Natural killer cell (primary cell): ENCODE measurements at regions of chr5 and their contacts with region 1.

Region 1: GRCh38 chr5:126544087-126544740 is 50.8 kb downstream of the ALDH7A1 start:
- DNase-seq: peak in 1 of 2 donors; percentile 49
- ATAC-seq: no peak
- H3K4me3 ChIP-seq: no peak overlapping the region
- H3K4me3 Mint-ChIP-seq: no peak overlapping the region
- H3K27ac ChIP-seq: no peak overlapping the region
- H3K27ac Mint-ChIP-seq: no peak overlapping the region
- H3K4me1 ChIP-seq: no peaks in the 10 kb centered on the region
- H3K4me1 Mint-ChIP-seq: no peaks in the 10 kb centered on the region
- H3K27me3 ChIP-seq: no peaks in the 10 kb centered on the region
- H3K27me3 Mint-ChIP-seq: no peaks in the 10 kb centered on the region
- CTCF ChIP-seq: peak; percentile 15

Region 2: DNA sequence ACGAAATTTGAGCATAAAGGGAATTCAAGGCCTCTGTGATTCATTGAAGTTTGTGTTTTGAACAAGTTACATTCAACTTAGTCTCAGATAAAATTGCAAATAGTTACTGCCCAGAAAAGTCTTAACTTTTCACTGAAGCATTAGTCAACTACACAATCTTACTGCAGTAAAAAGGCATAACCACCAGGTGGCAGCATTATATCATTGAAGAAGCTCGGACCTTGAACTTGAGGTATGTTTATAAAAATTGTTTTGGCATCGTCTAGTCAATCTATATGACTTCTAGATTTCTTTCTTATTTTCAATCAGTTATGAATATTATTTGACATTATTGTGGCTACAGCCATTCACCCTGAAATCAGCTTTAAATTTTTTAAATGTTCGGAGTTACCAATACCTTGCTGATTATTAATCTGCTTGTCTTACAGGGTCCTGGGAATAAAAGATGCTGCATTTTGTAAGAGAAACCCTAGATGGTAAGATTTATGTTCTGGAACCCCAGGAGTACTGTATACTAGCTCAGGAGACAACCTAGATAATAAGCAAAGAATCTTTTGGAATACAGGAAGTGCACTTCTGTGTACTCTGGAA is 204.9 kb before region 1 on chr5:
- intact Hi-C with region 1: loop called (anchors 1 kb)
- DNase-seq: peak in 1 of 2 donors; percentile 80
- ATAC-seq: peak; percentile 58 to 64 (median 59)
- H3K4me3 ChIP-seq: no peak overlapping the region
- H3K4me3 Mint-ChIP-seq: no peak overlapping the region
- H3K27ac ChIP-seq: no peak overlapping the region
- H3K27ac Mint-ChIP-seq: no peak overlapping the region
- H3K4me1 ChIP-seq: no peaks in the 10 kb centered on the region
- H3K4me1 Mint-ChIP-seq: no peaks in the 10 kb centered on the region
- H3K27me3 ChIP-seq: no peaks in the 10 kb centered on the region
- H3K27me3 Mint-ChIP-seq: peaks cover 7 to 37% of the 10 kb centered on the region in 2 donors
- CTCF ChIP-seq: peak; percentile 87

Region 3: DNA sequence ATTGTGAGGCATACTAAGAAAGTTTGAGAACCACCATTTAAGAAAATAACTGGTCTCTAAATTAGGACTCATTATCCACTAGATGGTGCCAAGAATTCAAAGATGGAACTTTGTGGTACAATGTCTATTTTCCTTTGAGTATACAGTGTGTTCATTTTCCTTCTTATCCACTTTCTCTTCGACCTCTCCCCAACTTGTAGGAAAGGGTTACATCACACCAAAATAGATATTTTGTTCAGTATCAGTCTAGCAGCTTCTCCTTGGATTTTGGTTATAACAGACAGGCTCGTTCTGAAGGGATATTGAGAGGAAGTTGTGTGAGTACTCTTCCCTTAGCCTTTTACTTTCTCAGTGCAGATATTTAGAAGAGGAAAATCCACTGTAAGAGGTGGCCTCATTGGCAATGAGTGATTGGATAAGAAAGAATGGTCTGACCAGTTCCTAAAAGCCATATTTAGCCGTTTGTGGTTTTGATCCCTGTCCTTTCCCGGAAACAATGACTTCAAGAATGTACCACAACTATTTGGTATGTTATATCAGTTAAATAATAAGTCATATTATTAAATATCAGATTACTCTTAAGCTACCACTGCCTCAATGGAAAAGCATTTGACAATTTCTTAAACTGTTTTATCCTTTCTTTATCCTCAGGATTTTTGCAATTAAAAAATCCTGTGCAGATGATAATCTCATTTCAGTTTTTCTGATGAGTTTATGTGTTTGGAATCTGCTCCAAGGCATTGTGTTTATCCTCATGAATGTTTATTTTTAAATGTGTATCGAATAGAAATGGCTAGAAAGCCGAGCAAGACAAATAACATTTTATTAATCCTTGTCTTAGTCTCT is 190.0 kb before region 1 on chr5:
- intact Hi-C with region 1: loop called (anchors 1 kb)
- DNase-seq: peak in 1 of 2 donors; percentile 72
- ATAC-seq: peak in 2 of 3 donors; percentile 54 to 62
- H3K4me3 ChIP-seq: no peak overlapping the region
- H3K4me3 Mint-ChIP-seq: peak overlapping the region; percentile 22
- H3K27ac ChIP-seq: no peak overlapping the region
- H3K27ac Mint-ChIP-seq: no peak overlapping the region
- H3K4me1 ChIP-seq: peaks cover 7% of the 10 kb centered on the region
- H3K4me1 Mint-ChIP-seq: peaks cover 15 to 20% of the 10 kb centered on the region in 2 donors
- H3K27me3 ChIP-seq: no peaks in the 10 kb centered on the region
- H3K27me3 Mint-ChIP-seq: peaks cover 5 to 6% of the 10 kb centered on the region in 2 donors
- CTCF ChIP-seq: peak; percentile 64